ENCODE measurements at regions of chr4 and their contacts with region 1.

Region 1: DNA sequence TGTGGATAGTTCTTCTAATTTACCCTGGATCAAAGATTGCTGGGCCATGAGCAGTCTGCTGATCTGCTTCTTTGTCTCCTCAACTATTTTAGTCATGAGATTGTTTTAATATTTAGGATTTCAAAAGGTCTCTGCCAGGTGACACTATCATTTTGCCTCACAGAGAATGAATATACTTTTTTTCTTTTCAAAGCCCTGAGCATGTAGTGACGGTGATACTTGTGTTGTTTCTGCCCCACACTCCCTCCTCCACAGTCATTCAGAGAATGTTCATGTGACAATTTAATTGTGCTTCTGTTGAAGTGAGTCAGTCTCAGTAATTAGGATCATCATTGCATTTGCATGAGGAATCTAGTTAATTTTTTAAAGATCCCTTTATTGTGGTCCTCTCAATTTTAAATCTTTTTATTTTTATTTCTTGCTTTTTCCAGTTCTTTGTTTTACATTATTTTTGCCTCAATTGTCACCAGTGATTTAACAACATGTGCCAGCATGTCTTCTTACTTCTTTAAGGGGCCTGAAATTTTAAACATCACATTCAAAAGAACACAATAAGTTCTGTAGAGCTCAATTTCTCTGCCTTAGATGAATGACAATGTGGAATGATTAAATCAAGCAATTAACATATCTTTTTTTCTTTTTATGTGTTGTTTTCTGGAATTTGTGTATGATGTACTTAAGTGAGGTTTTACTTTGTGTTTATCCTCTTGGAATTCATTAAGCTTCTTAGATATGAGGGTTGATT is 12.3 kb downstream of the MMRN1 start:
- DNase-seq: no peak
- ATAC-seq: no peak
- H3K4me3 ChIP-seq: no peak overlapping the region
- H3K27ac ChIP-seq: no peak overlapping the region
- H3K4me1 ChIP-seq: no peaks in the 10 kb centered on the region
- H3K27me3 ChIP-seq: no peaks in the 10 kb centered on the region
- CTCF ChIP-seq: no peak
- POLR2A ChIP-seq: no peak
- RAD21 ChIP-seq: no peak

Region 2: GRCh38 chr4:89598602-89599001 is 308.3 kb before region 1 on chr4:
- CTCF ChIA-PET with region 1: no interaction called
- POLR2A ChIA-PET with region 1: no interaction called
- RAD21 ChIA-PET with region 1: no interaction called
- intact Hi-C with region 1: loop called (anchors 5 kb)
- DNase-seq: peak; percentile 26
- ATAC-seq: peak; percentile 70
- H3K4me3 ChIP-seq: no peak overlapping the region
- H3K27ac ChIP-seq: no peak overlapping the region
- H3K4me1 ChIP-seq: no peaks in the 10 kb centered on the region
- H3K27me3 ChIP-seq: no peaks in the 10 kb centered on the region
- CTCF ChIP-seq: peak; percentile 27 to 58 (median 38); a peak in 5 of 6 replicates
- POLR2A ChIP-seq: no peak
- RAD21 ChIP-seq: peak; percentile 45; the same call in 1 of the 2 replicates

Region 3: DNA sequence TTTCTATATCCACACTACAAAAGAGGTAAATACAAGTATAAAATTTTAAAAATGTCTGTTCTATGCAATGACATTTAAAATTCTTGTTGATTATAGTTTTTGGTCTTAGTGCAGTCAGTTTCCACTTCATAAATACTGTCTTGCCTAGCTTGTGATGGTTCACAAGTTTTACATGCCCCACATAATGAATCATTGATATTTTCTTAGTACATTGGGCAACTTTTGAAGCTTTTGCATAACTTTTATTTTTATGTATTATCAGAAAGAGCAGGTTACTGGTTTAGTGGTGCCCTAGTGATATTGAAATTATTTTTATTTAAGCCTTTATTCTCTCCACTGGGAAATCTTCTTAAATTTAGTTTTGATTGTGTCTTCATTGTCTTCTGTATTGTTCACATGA is 608.2 kb after region 1 on chr4:
- CTCF ChIA-PET with region 1: no interaction called
- POLR2A ChIA-PET with region 1: no interaction called
- RAD21 ChIA-PET with region 1: no interaction called
- intact Hi-C with region 1: no loop called
- DNase-seq: no peak
- ATAC-seq: no peak
- H3K4me3 ChIP-seq: no peak overlapping the region
- H3K27ac ChIP-seq: no peak overlapping the region
- H3K4me1 ChIP-seq: no peaks in the 10 kb centered on the region
- H3K27me3 ChIP-seq: no peaks in the 10 kb centered on the region
- CTCF ChIP-seq: no peak
- POLR2A ChIP-seq: no peak
- RAD21 ChIP-seq: no peak